Caco-2 (cell line): ENCODE measurements at regions of chr20 and their contacts with region 1.

Region 1: GRCh38 chr20:330233-331149 is 5.1 kb downstream of the SOX12 start:
- DNase-seq: peak; percentile 76 to 77
- H3K4me3 ChIP-seq: no peak overlapping the region
- H3K4me3 Mint-ChIP-seq: no peak overlapping the region
- H3K27ac Mint-ChIP-seq: no peak overlapping the region
- H3K4me1 ChIP-seq: 0 out of 2 replicates have a peak, but pooled peaks cover 5% of the 10 kb centered on the region
- H3K4me1 Mint-ChIP-seq: peaks cover 8% of the 10 kb centered on the region
- H3K27me3 ChIP-seq: no peaks in the 10 kb centered on the region
- H3K27me3 Mint-ChIP-seq: no peaks in the 10 kb centered on the region
- CTCF ChIP-seq: peak; percentile 89 to 93

Region 2: GRCh38 chr20:208942-209566 is 121.4 kb before region 1 on chr20:
- CTCF ChIA-PET with region 1: no interaction called
- POLR2A ChIA-PET with region 1: interaction called, 3 read pairs
- intact Hi-C with region 1: loop called (anchors 2 kb)
- DNase-seq: peak in 1 of 2 experiments; percentile 38
- H3K4me3 ChIP-seq: no peak overlapping the region
- H3K4me3 Mint-ChIP-seq: no peak overlapping the region
- H3K27ac Mint-ChIP-seq: no peak overlapping the region
- H3K4me1 ChIP-seq: peaks cover 4% of the 10 kb centered on the region
- H3K4me1 Mint-ChIP-seq: peaks cover 9% of the 10 kb centered on the region
- H3K27me3 ChIP-seq: no peaks in the 10 kb centered on the region
- H3K27me3 Mint-ChIP-seq: no peaks in the 10 kb centered on the region
- CTCF ChIP-seq: peak; percentile 34 to 59